IMR-90 (cell line): ENCODE measurements at regions of chr1 and their contacts with region 1.

Region 1: GRCh38 chr1:54499360-54500106 is 48.5 kb upstream of the ACOT11 start:
- DNase-seq: peak; percentile 36
- ATAC-seq: peak; percentile 87
- H3K4me3 ChIP-seq: peak overlapping the region; percentile 11; the same call in 1 of the 2 replicates
- H3K27ac ChIP-seq: no peak overlapping the region
- H3K4me1 ChIP-seq: peaks cover 5% of the 10 kb centered on the region; the same call in 1 of the 2 replicates
- H3K27me3 ChIP-seq: peaks cover 52% of the 10 kb centered on the region
- CTCF ChIP-seq: peak; percentile 46
- POLR2A ChIP-seq: no peak
- RAD21 ChIP-seq: peak; percentile 44

Region 2: DNA sequence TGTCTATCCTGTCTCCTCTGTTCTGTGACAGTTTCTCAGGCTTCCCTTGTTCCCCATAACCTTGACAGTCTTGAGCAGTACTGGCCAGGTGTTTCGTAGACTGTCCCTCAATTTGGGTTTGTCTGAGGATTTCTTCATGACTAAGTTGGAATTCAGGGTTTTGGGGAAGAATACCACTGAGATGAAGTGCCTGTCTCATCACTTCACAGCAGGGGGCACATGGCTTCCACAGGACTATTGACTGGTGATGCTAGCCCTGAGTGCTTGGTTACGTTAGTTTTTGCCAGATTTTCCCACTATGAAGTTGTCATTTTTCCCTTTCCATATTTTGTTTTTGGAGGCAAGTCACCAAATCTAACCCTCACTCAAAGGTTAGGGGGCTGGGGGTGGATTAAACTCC is 392.4 kb before region 1 on chr1:
- CTCF ChIA-PET with region 1: no interaction called
- POLR2A ChIA-PET with region 1: no interaction called
- dilution Hi-C with region 1: no loop called
- in situ Hi-C with region 1: loop called (anchors 10 kb)
- intact Hi-C with region 1: no loop called
- DNase-seq: peak; percentile 38
- ATAC-seq: peak; percentile 68
- H3K4me3 ChIP-seq: no peak overlapping the region
- H3K27ac ChIP-seq: no peak overlapping the region
- H3K4me1 ChIP-seq: no peaks in the 10 kb centered on the region
- H3K27me3 ChIP-seq: no peaks in the 10 kb centered on the region
- CTCF ChIP-seq: peak; percentile 45
- POLR2A ChIP-seq: no peak
- RAD21 ChIP-seq: peak; percentile 71

Region 3: DNA sequence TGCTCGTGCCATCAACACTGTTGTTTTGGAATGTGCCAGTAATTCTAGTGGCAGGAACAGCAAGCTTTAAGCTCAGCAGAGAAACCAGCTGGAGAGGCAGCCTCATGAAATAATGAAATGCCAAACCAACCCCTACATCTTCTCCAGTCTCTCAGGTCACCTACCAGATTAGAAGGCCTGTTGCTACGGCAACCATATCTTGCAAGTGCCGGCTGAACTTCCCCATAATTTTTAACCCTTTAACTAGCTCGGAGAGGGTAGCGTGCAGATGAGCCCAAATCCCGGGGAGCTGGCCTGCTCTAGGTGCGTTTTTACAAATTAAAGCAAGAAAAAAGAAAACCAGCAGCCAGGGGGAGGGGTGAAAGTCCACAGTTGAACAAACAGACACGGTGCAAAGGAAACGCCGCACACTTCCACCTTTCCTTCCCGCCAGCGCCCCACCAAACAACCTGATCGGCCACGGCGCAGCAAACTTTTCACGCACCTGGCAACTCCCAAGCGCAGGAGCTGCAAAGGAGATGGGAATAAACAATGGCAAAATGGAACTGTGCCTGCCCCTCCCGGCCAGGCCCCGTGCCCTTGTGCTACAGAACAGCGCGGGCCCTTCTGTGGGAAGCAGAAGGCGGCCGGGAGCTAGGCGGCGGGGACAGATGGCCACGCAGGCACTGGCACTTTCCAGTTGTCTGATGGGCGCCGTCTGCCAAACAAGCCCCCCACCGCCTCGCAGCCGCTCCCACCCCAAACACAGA is 143.4 kb before region 1 on chr1:
- CTCF ChIA-PET with region 1: no interaction called
- POLR2A ChIA-PET with region 1: no interaction called
- dilution Hi-C with region 1: no loop called
- in situ Hi-C with region 1: no loop called
- intact Hi-C with region 1: no loop called
- DNase-seq: no peak
- ATAC-seq: no peak
- H3K4me3 ChIP-seq: no peak overlapping the region
- H3K27ac ChIP-seq: no peak overlapping the region
- H3K4me1 ChIP-seq: peaks cover 16% of the 10 kb centered on the region
- H3K27me3 ChIP-seq: no peaks in the 10 kb centered on the region
- CTCF ChIP-seq: no peak
- POLR2A ChIP-seq: no peak
- RAD21 ChIP-seq: no peak